ENCODE measurements at regions of chr17 and their contacts with region 1.

Region 1: GRCh38 chr17:42677008-42677857 is 439 bp upstream of the PLEKHH3 start:
- DNase-seq: peak; percentile 99 to 100 (median 100)
- H3K4me3 ChIP-seq: peak overlapping the region; percentile 69 to 96 (median 90)
- H3K27ac ChIP-seq: peak overlapping the region; percentile 34 to 99 (median 96)
- H3K27me3 ChIP-seq: no peaks in the 10 kb centered on the region
- CTCF ChIP-seq: peak in 5 of 56 donors; percentile 2 to 9 (median 3)

Region 2: DNA sequence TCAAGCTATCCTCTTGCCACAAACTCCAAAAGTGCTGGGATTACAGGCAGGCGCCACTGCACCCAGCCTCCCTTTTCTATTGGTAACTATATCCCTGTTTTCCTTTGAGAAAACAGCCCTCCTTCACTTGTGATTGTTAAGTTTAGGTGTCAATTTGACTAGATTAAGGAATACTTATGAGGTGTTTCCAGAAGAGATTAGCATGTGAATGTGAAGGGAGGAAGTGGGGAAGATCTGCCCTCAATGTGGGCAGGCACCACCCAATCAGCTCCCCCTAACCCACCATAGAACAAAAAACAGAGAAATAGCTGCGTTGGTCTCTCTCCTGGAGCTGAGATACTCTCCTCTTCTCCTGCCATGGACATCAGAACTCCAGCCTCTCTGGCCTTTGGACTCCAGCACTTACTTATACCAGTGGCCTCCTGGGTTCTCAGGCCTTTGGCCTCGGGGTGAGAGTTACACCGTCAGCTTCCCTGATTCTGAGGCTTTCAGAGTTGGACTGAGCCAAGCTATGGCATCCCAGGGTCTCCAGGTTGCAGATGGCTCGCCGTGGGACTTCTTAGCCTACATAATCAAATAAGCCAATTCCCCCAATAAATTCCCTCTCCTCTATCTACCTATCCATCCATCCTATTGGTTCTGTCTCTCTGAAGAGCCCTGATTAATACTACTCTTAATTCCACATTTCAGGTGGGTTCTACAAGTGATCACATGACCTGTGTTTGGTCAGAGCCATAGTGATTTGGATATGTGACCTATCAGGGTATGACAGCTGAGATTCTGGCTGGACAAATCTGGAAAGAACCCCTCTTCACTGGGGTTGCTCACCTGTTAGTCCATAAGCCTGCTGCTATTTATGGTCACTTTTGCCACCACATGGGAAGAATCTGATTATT is 277.0 kb before region 1 on chr17:
- intact Hi-C with region 1: loop called in 1 of 2 experiments (anchors 10 kb)
- DNase-seq: no peak
- H3K4me3 ChIP-seq: no peak overlapping the region
- H3K27ac ChIP-seq: no peak overlapping the region
- H3K27me3 ChIP-seq: peaks cover 0 to 4% (median 0%) of the 10 kb centered on the region in 45 donors
- CTCF ChIP-seq: no peak

Region 3: GRCh38 chr17:42566883-42567573 is 110.2 kb before region 1 on chr17 and contains the start of gene MLX:
- intact Hi-C with region 1: loop called in 1 of 2 experiments (anchors 5 kb)
- DNase-seq: peak; percentile 82 to 95 (median 90)
- H3K4me3 ChIP-seq: peak within 1 kb of the TSS; percentile 73 to 100 (median 96)
- H3K27ac ChIP-seq: peak within 1 kb of the TSS; percentile 85 to 98 (median 94)
- H3K27me3 ChIP-seq: no peaks in the 10 kb centered on the region
- CTCF ChIP-seq: peak in 16 of 56 donors; percentile 7 to 38 (median 20)
- total RNA-seq, gene MLX: 16.9 to 36.3 (median 26.3) TPM

Region 4: GRCh38 chr17:42577532-42578281 is 99.5 kb before region 1 on chr17 and contains the start of gene PSMC3IP:
- intact Hi-C with region 1: loop called in 1 of 2 experiments (anchors 5 kb)
- DNase-seq: peak; percentile 89 to 97 (median 96)
- H3K4me3 ChIP-seq: peak within 1 kb of the TSS; percentile 56 to 99 (median 82)
- H3K27ac ChIP-seq: peak within 1 kb of the TSS in 58 of 59 donors; percentile 6 to 95 (median 87)
- H3K27me3 ChIP-seq: no peaks in the 10 kb centered on the region
- CTCF ChIP-seq: peak in 54 of 56 donors; percentile 13 to 71 (median 46)
- total RNA-seq, gene PSMC3IP: 1.4 to 11.5 (median 5.9) TPM

Region 5: DNA sequence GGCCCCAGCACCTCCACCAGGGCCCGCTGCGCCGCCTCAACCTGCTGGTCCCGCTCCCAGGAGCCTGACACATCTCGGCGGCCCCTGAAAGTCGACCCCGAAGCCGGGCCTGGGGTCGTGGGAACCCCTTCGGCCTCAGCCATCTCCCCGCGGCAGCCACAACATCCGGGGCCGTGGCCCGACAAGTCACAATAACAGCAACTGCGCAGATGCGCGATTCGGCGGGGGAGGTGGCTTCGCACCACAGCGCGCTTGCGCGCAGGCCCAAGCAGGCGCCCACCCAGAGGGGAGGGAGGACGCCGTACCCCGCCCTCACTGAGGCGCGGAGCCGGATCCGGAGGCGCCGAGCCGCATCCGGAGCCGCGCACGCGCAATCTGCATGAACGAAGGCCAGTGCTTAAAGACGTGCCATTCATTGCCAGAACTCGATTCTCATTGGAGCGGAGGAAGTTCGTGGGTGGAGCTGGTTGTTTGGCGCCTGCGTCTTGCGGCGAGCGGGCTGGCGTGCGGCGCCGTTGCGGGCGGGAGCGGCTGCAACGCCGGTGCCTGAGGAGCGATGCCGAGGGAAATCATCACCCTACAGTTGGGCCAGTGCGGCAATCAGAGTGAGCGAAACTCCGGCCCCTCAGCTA is 67.9 kb before region 1 on chr17 and contains the starts of genes RETREG3 and TUBG1:
- intact Hi-C with region 1: loop called (anchors 2 kb)
- DNase-seq: peak; percentile 97 to 99 (median 98)
- H3K4me3 ChIP-seq: peak within 1 kb of the TSS; percentile 68 to 100 (median 92)
- H3K27ac ChIP-seq: peak within 1 kb of the TSS; percentile 78 to 99 (median 94)
- H3K27me3 ChIP-seq: no peaks in the 10 kb centered on the region
- CTCF ChIP-seq: peak in 44 of 56 donors; percentile 1 to 57 (median 25)
- total RNA-seq, gene RETREG3: 38.8 to 64.5 (median 50.8) TPM
- total RNA-seq, gene TUBG1: 29.0 to 81.9 (median 52.2) TPM